ENCODE measurements at regions of chr20 and their contacts with region 1.

Region 1: GRCh38 chr20:45052698-45053429 is 48.1 kb downstream of the KCNS1 start:
- DNase-seq: no peak
- ATAC-seq: no peak
- H3K4me3 ChIP-seq: no peak overlapping the region
- H3K27ac ChIP-seq: peak overlapping the region in 4 of 12 donors; percentile 0 to 57 (median 12)
- H3K4me1 ChIP-seq: peaks cover 0 to 50% (median 29%) of the 10 kb centered on the region in 12 donors
- H3K27me3 ChIP-seq: no peaks in the 10 kb centered on the region
- CTCF ChIP-seq: no peak
- POLR2A ChIP-seq: no peak

Region 2: GRCh38 chr20:44861531-44862006 is 191.3 kb before region 1 on chr20:
- intact Hi-C with region 1: no loop called
- DNase-seq: peak in 2 of 5 donors; percentile 32 to 48
- ATAC-seq: peak; percentile 42 to 91 (median 70)
- H3K4me3 ChIP-seq: no peak overlapping the region
- H3K27ac ChIP-seq: no peak overlapping the region
- H3K4me1 ChIP-seq: peaks cover 0 to 27% (median 6%) of the 10 kb centered on the region in 12 donors
- H3K27me3 ChIP-seq: no peaks in the 10 kb centered on the region
- CTCF ChIP-seq: no peak
- POLR2A ChIP-seq: no peak

Region 3: DNA sequence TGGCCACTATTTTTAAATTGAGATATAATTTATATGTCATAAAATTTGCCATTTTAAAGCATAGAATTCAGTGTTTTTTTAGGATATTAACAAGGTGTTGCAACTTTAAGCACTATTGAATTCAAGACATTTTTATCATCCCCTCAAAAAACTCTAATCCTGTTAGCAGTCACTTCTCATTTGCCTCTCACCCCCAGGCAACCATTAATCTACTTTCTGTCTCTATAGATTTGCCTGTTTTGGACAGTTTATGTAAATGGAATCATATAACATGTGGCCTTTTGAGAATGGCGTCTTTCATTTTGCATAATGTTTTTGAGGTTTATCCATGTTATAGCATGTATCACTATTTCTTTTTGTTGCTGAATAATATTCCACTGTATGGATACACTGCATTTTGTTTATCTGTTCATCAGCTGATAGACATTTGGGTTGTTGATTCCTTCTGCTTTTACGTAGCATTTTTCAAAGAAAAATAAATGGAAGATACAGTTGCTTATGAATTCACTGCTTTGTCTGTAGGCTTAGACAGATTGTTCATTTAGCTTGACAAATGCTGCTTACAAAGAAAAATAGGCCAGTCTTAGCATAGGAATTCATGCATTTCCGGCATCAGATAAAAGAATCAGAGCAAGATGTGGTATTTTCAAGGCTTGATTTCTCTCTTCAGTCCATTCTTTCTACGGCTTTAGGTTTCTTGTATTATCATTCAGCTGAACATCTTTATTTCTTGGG is 33.7 kb before region 1 on chr20:
- intact Hi-C with region 1: loop called in 2 of 10 experiments (anchors 1 to 5 kb)
- DNase-seq: no peak
- ATAC-seq: no peak
- H3K4me3 ChIP-seq: no peak overlapping the region
- H3K27ac ChIP-seq: peak overlapping the region in 1 of 12 donors; percentile 15
- H3K4me1 ChIP-seq: peaks cover 0 to 57% (median 30%) of the 10 kb centered on the region in 12 donors
- H3K27me3 ChIP-seq: no peaks in the 10 kb centered on the region
- CTCF ChIP-seq: no peak
- POLR2A ChIP-seq: no peak